CD8-positive, alpha-beta memory T cell (primary cell): ENCODE measurements at regions of chr10 and their contacts with region 1.

Region 1: GRCh38 chr10:119090968-119091367 is 10.4 kb upstream of the EIF3A start:
- DNase-seq: peak in 4 of 5 donors; percentile 25 to 78 (median 56)
- H3K4me3 ChIP-seq: peak overlapping the region; percentile 31
- H3K4me3 Mint-ChIP-seq: peak overlapping the region; percentile 56 to 90 (median 81)
- H3K27ac ChIP-seq: peak overlapping the region; percentile 65
- H3K27ac Mint-ChIP-seq: peak overlapping the region; percentile 95 to 99 (median 98)
- H3K4me1 ChIP-seq: peaks cover 46% of the 10 kb centered on the region
- H3K4me1 Mint-ChIP-seq: peaks cover 47 to 54% (median 50%) of the 10 kb centered on the region in 3 donors
- H3K27me3 ChIP-seq: no peaks in the 10 kb centered on the region
- H3K27me3 Mint-ChIP-seq: no peaks in the 10 kb centered on the region

Region 2: DNA sequence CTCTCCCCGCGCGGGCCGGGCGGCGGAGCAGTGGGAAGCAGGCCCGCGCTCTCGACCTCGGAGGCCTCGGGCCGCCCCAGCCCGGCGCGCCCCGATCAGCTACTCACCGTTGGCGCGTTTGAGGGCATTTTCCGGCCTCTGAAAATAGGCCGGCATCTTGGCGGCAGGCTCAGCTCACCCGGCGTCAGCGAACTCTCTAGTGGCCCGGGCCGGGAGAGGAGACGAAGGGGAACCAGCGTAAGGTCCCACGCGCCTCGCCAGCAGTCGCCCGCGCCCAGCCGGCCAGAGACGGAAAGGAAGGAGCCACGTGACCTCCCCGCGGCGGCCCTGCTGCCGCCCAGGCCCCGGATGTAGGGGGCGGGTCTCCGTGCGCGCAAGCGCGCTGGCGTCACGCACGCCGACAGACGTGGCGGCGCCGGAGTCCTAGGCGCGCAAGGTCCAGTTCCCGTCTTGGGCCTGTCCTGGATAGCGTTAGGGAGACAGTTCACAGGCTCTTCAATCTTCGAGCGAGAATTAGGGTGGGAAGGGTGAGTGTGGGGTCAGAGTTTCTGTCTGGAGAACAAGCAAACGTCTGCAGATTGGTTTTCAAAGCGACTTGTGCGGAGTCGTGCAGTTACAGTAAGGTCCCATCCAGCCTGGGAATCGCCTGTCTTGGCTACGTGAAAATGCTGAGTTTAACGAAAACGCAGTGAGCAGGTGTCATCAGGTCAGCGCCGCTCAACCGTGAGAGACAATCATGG is 10.3 kb before region 1 on chr10 and contains the start of gene EIF3A:
- CTCF ChIA-PET with region 1: interaction called, 10 read pairs
- POLR2A ChIA-PET with region 1: interaction called, 16 read pairs
- DNase-seq: peak; percentile 87 to 93 (median 90)
- H3K4me3 ChIP-seq: peak within 1 kb of the TSS; percentile 95
- H3K4me3 Mint-ChIP-seq: peak within 1 kb of the TSS; percentile 92 to 100 (median 94)
- H3K27ac ChIP-seq: peak within 1 kb of the TSS; percentile 88
- H3K27ac Mint-ChIP-seq: peak within 1 kb of the TSS; percentile 95 to 99 (median 98)
- H3K4me1 ChIP-seq: peaks cover 28% of the 10 kb centered on the region
- H3K4me1 Mint-ChIP-seq: peaks cover 46 to 62% (median 51%) of the 10 kb centered on the region in 3 donors
- H3K27me3 ChIP-seq: no peaks in the 10 kb centered on the region
- H3K27me3 Mint-ChIP-seq: peaks cover 0 to 5% of the 10 kb centered on the region in 2 donors
- total RNA-seq, gene EIF3A: 181 to 195 TPM

Region 3: GRCh38 chr10:119199231-119199992 is 108.4 kb after region 1 on chr10:
- CTCF ChIA-PET with region 1: no interaction called
- POLR2A ChIA-PET with region 1: no interaction called
- DNase-seq: peak in 3 of 5 donors; percentile 27 to 59 (median 49)
- H3K4me3 ChIP-seq: no peak overlapping the region
- H3K4me3 Mint-ChIP-seq: no peak overlapping the region
- H3K27ac ChIP-seq: no peak overlapping the region
- H3K27ac Mint-ChIP-seq: no peak overlapping the region
- H3K4me1 ChIP-seq: no peaks in the 10 kb centered on the region
- H3K4me1 Mint-ChIP-seq: peaks cover 0 to 13% (median 2%) of the 10 kb centered on the region in 3 donors
- H3K27me3 ChIP-seq: no peaks in the 10 kb centered on the region
- H3K27me3 Mint-ChIP-seq: peaks cover 3% of the 10 kb centered on the region in 2 donors